ENCODE measurements at regions of chr2 and their contacts with region 1.

Region 1: GRCh38 chr2:169694113-169694903 is at the starts of genes CFAP210 and PHOSPHO2:
- DNase-seq: peak; percentile 98
- H3K4me3 Mint-ChIP-seq: peak within 1 kb of the TSS; percentile 84
- H3K27ac Mint-ChIP-seq: peak within 1 kb of the TSS; percentile 71
- H3K4me1 Mint-ChIP-seq: peaks cover 13% of the 10 kb centered on the region
- H3K27me3 Mint-ChIP-seq: no peaks in the 10 kb centered on the region
- total RNA-seq, gene CFAP210: not detected
- total RNA-seq, gene PHOSPHO2: 1.2 TPM

Region 2: GRCh38 chr2:168890006-168890782 is 804.1 kb before region 1 on chr2 and contains the start of gene SPC25:
- CTCF ChIA-PET with region 1: no interaction called
- intact Hi-C with region 1: loop called (anchors 5 kb)
- DNase-seq: peak; percentile 95
- H3K4me3 Mint-ChIP-seq: peak within 1 kb of the TSS; percentile 100
- H3K27ac Mint-ChIP-seq: peak within 1 kb of the TSS; percentile 90
- H3K4me1 Mint-ChIP-seq: peaks cover 11% of the 10 kb centered on the region
- H3K27me3 Mint-ChIP-seq: peaks cover 2% of the 10 kb centered on the region
- total RNA-seq, gene SPC25: 31.0 to 32.0 TPM

Region 3: DNA sequence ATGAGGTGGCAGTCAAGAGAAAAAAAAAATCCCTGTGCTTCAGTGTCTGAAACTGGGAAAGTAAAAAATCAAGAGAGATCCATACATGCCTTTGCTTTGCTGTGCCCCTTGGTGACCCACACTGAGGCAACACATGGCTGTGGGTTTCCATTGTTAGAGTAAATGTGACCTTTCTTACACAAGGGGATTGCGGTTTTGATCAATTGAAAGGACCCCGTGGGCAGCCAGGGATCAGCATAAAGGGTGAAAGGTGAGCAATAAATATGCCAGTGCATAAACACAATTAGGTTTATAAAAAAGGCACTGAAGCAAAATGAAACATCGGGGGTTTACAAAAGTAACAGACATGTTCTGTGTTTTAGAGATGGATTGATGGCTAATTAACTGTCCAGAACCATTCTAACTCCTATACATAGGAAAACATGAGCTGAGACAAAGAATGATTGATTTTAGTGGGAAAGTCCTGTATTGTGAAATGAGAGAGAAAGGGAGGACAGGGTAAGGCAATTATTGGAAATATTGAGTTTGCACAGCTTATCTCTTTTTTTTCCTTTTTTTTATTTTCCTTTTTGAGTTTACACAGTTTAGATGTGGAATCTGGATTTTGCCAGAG is 255.7 kb before region 1 on chr2:
- CTCF ChIA-PET with region 1: no interaction called
- intact Hi-C with region 1: no loop called
- DNase-seq: no peak
- H3K4me3 Mint-ChIP-seq: no peak overlapping the region
- H3K27ac Mint-ChIP-seq: no peak overlapping the region
- H3K4me1 Mint-ChIP-seq: no peaks in the 10 kb centered on the region
- H3K27me3 Mint-ChIP-seq: peaks cover 13% of the 10 kb centered on the region

Region 4: GRCh38 chr2:169479257-169480078 is 214.8 kb before region 1 on chr2 and contains the start of gene BBS5:
- CTCF ChIA-PET with region 1: no interaction called
- intact Hi-C with region 1: loop called (anchors 2 kb)
- DNase-seq: peak; percentile 87
- H3K4me3 Mint-ChIP-seq: peak within 1 kb of the TSS; percentile 91
- H3K27ac Mint-ChIP-seq: no peak within 1 kb of the TSS
- H3K4me1 Mint-ChIP-seq: peaks cover 10% of the 10 kb centered on the region
- H3K27me3 Mint-ChIP-seq: no peaks in the 10 kb centered on the region
- total RNA-seq, gene BBS5: 2.1 to 2.2 TPM

Region 5: GRCh38 chr2:169573160-169573973 is 120.9 kb before region 1 on chr2 and contains the start of gene FASTKD1:
- CTCF ChIA-PET with region 1: no interaction called
- intact Hi-C with region 1: loop called (anchors 1 kb)
- DNase-seq: peak; percentile 94
- H3K4me3 Mint-ChIP-seq: peak within 1 kb of the TSS; percentile 98
- H3K27ac Mint-ChIP-seq: peak within 1 kb of the TSS; percentile 89
- H3K4me1 Mint-ChIP-seq: peaks cover 23% of the 10 kb centered on the region
- H3K27me3 Mint-ChIP-seq: no peaks in the 10 kb centered on the region
- total RNA-seq, gene FASTKD1: 41.3 to 42.7 TPM

Region 6: DNA sequence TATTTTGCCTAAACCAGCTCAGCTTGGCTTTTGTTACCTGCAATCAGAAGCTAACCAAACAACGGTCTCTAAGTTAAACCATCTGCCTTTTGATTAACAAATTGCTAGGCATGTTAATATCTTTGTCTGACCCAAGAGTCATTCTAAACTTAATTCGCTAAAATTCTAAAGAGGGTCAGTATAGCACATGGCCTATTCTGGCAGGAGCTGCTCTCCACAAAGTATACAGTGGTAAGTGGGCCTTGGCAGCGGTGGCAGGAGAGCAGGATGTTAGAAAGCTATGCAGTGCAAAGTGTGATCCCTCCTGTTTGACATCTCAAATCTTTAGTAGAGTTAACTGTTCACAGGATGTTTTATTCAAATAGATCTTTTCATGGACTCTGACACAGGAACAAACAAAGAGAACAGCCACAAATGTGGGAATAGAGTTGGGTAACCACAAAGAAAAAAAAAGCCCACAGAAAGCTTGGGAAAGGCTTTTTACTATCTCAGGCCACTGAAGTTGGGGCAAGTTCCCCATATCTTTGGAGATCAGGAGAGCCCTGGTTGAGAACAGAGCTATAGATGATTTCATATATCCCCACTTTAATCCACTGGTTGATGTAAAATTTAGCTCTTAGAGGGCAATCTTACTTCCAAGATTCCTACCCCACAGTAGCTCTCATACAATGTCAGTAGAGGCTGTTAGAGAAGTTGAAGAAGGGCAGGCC is 10.7 kb before region 1 on chr2:
- CTCF ChIA-PET with region 1: no interaction called
- intact Hi-C with region 1: no loop called
- DNase-seq: no peak
- H3K4me3 Mint-ChIP-seq: no peak overlapping the region
- H3K27ac Mint-ChIP-seq: no peak overlapping the region
- H3K4me1 Mint-ChIP-seq: no peaks in the 10 kb centered on the region
- H3K27me3 Mint-ChIP-seq: no peaks in the 10 kb centered on the region

Region 7: DNA sequence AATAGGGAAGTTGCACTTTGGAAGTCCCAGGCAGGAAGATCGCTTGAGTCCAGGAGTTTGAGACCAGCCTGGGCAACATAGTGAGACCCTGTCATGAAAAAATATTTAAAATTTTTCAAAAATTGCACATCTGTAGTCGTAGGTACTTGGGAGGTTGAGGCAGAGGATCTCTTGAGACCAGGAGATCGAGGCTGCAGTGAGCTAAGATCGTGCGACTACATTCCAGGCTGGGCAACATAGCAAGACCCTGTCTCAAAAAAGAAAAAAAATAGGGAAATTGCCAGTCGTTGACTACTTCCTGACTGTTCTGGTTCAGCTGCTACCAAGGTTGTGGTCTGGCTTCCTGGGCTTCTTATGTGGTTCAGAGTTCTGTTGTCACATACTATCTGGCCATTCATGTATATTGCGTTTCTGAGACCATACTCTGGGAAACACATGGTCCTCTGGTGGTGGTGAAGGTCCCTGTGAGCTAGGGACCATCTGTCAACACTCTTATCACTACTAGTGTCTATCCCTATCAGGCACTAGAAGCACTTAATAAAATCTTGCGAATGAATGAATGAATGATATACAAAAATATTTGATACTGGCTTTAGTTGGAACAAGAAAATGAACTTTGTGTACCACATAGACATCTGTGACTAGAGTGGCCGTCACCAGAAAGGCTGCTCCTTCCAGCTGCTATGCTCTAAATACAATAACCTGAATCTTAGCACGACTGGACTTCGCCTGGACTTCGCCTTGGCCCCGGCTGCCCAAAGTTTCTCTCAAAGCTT is 38.5 kb after region 1 on chr2:
- CTCF ChIA-PET with region 1: no interaction called
- intact Hi-C with region 1: loop called (anchors 1 kb)
- DNase-seq: no peak
- H3K4me3 Mint-ChIP-seq: peak overlapping the region; percentile 82
- H3K27ac Mint-ChIP-seq: no peak overlapping the region
- H3K4me1 Mint-ChIP-seq: peaks cover 5% of the 10 kb centered on the region
- H3K27me3 Mint-ChIP-seq: peaks cover 37% of the 10 kb centered on the region

Region 8: DNA sequence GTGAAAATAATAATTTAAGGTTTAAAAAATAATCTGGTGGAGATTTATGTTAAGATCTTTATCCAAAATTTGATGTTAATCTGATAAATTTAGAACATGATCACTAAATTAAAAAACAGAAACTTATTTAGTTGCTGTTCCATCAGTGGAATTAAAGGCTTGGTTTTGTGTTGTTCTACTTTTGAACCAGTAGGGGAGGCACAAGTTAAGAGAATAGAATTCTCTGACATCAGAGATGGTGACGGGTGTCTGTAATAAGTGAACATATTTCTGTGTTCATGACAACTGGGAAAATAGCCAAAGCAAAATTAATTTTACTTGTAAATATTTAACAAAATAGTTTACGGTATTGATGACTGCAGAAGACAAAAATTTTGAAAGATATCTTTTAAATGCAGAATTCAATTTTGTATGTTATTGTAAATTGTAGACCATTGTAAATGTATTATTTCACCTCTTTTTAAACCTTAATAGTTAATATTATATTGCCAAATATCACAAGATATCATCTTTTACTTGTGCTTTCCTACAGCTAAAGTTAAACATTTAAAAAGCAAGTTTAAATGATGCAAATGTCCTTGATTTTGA is 238.9 kb after region 1 on chr2:
- CTCF ChIA-PET with region 1: no interaction called
- intact Hi-C with region 1: loop called (anchors 5 kb)
- DNase-seq: no peak
- H3K4me3 Mint-ChIP-seq: no peak overlapping the region
- H3K27ac Mint-ChIP-seq: no peak overlapping the region
- H3K4me1 Mint-ChIP-seq: no peaks in the 10 kb centered on the region
- H3K27me3 Mint-ChIP-seq: no peaks in the 10 kb centered on the region

Region 9: GRCh38 chr2:170665743-170666142 is 971.4 kb after region 1 on chr2:
- CTCF ChIA-PET with region 1: no interaction called
- intact Hi-C with region 1: no loop called
- DNase-seq: no peak
- H3K4me3 Mint-ChIP-seq: no peak overlapping the region
- H3K27ac Mint-ChIP-seq: no peak overlapping the region
- H3K4me1 Mint-ChIP-seq: no peaks in the 10 kb centered on the region
- H3K27me3 Mint-ChIP-seq: no peaks in the 10 kb centered on the region

Measured in activated naive CD4-positive, alpha-beta T cell treated with anti-CD3 and anti-CD28 coated beads for 36 hours (primary cell).